ENCODE measurements at regions of chr6 and their contacts with region 1.

Region 1: GRCh38 chr6:72084992-72085569 is 198.7 kb downstream of the RIMS1 start:
- DNase-seq: no peak
- ATAC-seq: no peak
- H3K4me3 ChIP-seq: no peak overlapping the region
- H3K27ac ChIP-seq: no peak overlapping the region
- H3K4me1 ChIP-seq: no peaks in the 10 kb centered on the region
- H3K27me3 ChIP-seq: no peaks in the 10 kb centered on the region

Region 2: GRCh38 chr6:71621918-71622519 is 463.1 kb before region 1 on chr6:
- intact Hi-C with region 1: loop called (anchors 5 to 10 kb)
- DNase-seq: no peak
- ATAC-seq: no peak
- H3K4me3 ChIP-seq: no peak overlapping the region
- H3K27ac ChIP-seq: no peak overlapping the region
- H3K4me1 ChIP-seq: no peaks in the 10 kb centered on the region
- H3K27me3 ChIP-seq: no peaks in the 10 kb centered on the region

Region 3: DNA sequence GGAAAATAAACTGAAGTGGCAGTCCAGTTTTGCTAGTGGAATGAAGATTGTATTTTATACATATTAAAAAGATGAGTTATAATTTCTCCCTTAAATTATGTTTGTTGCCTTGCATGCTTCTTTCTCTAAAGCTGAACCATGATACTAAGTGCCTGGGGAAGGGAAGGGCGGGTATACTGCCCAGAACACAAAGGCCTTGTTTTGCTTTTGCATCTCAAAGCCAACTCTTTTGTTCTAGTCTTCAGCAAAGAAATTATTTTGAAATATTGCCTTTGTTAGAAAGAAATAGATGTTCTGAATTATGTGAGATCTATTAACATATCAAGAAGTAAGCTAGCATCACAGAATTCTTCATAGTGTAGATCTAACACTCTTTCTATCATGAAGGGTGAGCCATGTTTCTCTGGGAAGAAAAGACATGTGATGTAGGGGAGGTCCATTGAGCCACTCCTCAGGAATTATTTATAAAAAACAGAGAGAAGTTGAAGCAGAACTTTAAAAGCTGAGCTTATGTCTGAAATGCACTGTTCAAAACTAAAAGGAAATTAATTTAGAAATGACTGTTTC is 90.3 kb before region 1 on chr6:
- intact Hi-C with region 1: no loop called
- DNase-seq: no peak
- ATAC-seq: no peak
- H3K4me3 ChIP-seq: no peak overlapping the region
- H3K27ac ChIP-seq: no peak overlapping the region
- H3K4me1 ChIP-seq: no peaks in the 10 kb centered on the region
- H3K27me3 ChIP-seq: no peaks in the 10 kb centered on the region

Region 4: DNA sequence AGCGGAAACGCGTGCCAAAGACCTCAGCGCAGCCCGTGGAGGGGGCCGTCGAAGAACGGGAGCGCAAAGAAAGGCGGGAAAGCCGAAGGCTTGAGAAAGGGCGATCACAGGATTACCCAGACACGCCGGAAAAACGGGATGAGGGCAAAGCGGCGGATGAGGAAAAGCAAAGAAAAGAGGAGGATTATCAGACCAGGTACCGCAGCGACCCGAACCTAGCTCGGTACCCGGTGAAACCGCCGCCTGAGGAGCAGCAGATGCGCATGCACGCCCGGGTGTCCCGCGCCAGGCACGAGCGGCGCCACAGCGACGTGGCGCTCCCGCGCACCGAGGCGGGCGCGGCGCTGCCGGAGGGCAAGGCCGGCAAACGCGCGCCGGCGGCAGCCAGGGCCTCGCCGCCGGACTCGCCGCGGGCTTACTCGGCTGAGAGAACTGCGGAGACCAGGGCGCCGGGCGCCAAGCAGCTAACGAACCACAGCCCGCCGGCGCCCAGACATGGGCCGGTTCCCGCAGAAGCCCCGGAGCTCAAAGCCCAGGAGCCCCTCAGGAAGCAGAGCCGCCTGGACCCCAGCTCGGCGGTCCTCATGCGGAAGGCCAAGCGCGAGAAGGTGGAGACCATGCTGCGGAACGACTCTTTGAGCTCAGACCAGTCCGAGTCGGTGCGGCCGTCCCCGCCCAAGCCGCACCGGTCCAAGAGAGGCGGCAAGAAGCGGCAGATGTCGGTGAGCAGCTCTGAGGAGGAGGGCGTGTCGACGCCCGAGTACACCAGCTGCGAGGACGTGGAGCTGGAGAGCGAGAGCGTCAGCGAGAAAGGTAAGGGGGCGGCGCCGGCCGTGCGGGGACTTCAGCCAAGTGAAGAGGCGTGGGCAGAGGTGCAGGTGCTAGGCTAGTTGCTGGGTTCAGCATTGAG is 97.5 kb after region 1 on chr6:
- intact Hi-C with region 1: no loop called
- DNase-seq: no peak
- ATAC-seq: peak; percentile 44
- H3K4me3 ChIP-seq: peak overlapping the region; percentile 1 to 19
- H3K27ac ChIP-seq: no peak overlapping the region
- H3K4me1 ChIP-seq: no peaks in the 10 kb centered on the region
- H3K27me3 ChIP-seq: no peaks in the 10 kb centered on the region

Measured in aorta (tissue), 5 donors.